Stomach (tissue), 19 donors: ENCODE measurements at regions of chr19 and their contacts with region 1.

Region 1: DNA sequence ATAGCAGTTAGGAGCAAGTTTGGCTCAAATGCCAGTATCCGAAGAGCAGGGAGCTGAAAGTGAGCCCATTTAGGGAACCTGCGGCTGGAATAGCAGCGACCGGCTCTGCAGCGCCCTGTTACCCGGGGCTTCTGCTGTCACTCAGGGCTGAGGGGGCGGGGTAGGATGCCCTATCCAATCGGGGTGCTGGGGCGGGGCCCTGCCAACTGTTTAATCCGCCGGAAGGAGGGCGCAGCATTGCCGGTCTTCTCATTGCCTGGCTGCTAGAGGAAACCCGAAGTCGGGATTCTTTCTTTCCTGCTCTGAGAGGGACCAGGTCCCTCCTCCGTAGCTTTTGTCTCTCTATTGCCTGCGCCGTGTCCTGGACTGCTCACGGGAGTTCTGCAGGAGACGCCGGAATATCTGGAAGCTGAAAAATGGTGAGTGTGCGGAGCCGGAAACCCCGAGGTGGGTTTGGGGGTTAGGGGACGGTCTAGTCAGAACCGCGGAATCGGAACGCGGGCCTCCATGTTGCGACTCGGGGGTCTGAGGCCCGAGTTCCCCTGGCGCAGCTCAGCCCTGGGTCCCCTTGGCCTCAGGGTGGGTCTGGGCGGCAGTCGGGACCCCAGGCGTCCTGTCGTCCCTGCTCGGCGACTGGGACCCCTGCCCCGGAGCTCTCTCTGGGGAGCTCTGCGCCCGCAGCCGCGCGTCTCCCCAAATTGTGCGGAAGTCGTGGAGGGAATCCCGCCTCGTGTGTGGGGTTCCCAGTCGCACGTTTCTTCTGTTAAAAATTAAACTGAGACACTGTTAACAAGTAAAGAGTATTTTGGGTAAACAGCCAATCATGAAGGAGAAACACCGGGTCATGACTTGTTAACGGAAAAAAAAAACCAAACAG is 22.8 kb downstream of the ZNF763 start:
- DNase-seq: peak; percentile 97
- H3K4me3 ChIP-seq: peak overlapping the region; percentile 60 to 99 (median 80)
- H3K27ac ChIP-seq: peak overlapping the region; percentile 84 to 97 (median 89)
- H3K4me1 ChIP-seq: peaks cover 0 to 29% (median 15%) of the 10 kb centered on the region in 4 donors
- H3K27me3 ChIP-seq: no peaks in the 10 kb centered on the region
- CTCF ChIP-seq: peak in 1 of 7 experiments; percentile 13
- EP300 ChIP-seq: no peak
- POLR2A ChIP-seq: peak in 2 of 4 donors; percentile 46 to 49

Region 2: DNA sequence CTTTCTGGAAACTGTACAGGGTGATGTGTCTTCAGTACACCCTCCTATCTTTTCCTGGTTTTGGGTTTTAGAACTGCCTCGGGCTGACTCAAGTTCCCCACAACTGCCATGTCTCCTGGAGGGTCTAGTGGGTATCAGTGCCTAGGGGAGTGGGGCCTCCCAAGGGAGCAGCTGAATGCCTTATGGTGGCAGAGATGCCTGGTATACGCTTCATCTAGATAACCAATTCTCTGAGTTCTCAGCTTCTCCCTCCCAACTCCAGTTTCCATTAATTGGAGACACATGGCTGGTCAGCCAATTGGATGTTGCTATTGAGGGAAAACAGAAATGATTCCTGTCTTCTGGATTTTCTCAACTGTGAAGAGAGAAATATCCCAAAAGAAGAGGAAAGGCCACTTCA is 126.3 kb before region 1 on chr19:
- intact Hi-C with region 1: no loop called
- DNase-seq: no peak
- H3K4me3 ChIP-seq: no peak overlapping the region
- H3K27ac ChIP-seq: no peak overlapping the region
- H3K4me1 ChIP-seq: no peaks in the 10 kb centered on the region
- H3K27me3 ChIP-seq: no peaks in the 10 kb centered on the region
- CTCF ChIP-seq: no peak
- EP300 ChIP-seq: no peak
- POLR2A ChIP-seq: no peak

Region 3: GRCh38 chr19:11881151-11881800 is 106.4 kb before region 1 on chr19:
- intact Hi-C with region 1: loop called (anchors 5 kb)
- DNase-seq: peak; percentile 76 to 89
- H3K4me3 ChIP-seq: no peak overlapping the region
- H3K27ac ChIP-seq: no peak overlapping the region
- H3K4me1 ChIP-seq: peaks cover 8 to 19% (median 15%) of the 10 kb centered on the region in 4 donors
- H3K27me3 ChIP-seq: no peaks in the 10 kb centered on the region
- CTCF ChIP-seq: peak in 5 of 7 experiments; percentile 40 to 85 (median 65)
- EP300 ChIP-seq: no peak
- POLR2A ChIP-seq: no peak

Region 4: GRCh38 chr19:11924886-11925650 is 62.6 kb before region 1 on chr19 and contains the start of gene ZNF700:
- intact Hi-C with region 1: loop called (anchors 10 kb)
- DNase-seq: peak; percentile 98
- H3K4me3 ChIP-seq: peak within 1 kb of the TSS; percentile 68 to 94 (median 80)
- H3K27ac ChIP-seq: peak within 1 kb of the TSS; percentile 94 to 99 (median 97)
- H3K4me1 ChIP-seq: peaks cover 14 to 63% (median 37%) of the 10 kb centered on the region in 4 donors
- H3K27me3 ChIP-seq: no peaks in the 10 kb centered on the region
- CTCF ChIP-seq: no peak
- EP300 ChIP-seq: no peak
- POLR2A ChIP-seq: peak in 1 of 4 donors; percentile 34
- total RNA-seq, gene ZNF700: 8.8 to 25.3 (median 16.5) TPM

Region 5: DNA sequence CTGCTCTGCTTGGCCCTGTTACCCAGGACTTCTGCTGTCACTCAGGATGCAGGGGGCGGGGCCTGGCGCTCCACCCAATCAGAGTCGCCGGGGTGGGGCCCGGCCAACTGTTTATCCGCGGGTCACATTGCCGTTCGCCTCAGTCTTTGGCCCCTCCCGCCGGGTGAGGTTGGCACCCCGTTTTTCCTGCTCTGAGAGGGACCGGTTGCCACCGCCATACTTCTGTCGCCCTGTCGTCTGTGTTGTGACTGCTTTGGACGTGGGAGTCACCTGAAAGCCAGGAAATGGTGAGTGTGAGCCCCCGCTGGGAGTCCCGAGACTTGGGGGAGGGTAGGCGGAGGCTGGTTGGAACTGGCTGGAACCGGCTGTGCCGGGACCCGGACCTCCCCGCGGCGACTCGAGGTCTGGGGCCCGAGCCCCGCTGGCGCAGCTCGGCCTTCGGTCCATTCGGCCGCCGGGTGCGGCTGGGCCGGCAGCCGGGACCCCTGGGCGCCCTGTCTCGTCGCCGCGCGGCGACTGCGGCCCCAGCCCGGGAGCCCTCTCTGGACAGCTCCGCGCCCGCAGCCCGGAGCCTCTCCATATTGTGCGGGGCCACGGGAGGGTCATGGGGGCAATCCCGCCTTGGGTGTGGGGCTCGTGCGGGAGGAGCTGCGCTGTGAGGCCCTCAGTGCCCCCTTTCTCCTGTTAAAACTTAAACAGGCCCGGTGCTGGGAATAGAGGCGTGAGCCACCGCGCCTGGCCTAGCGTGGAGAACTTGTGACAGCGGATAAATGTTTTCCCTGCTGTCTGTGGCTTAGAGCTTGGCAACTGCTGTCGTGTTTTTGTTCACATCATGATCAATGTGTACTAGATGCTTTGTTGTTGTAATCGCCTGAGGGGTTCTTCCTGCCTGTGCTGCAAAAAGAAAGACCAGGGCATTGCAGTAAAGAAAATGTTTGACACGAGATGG is 77.2 kb after region 1 on chr19 and contains the start of gene ZNF844:
- intact Hi-C with region 1: no loop called
- DNase-seq: peak; percentile 98 to 99
- H3K4me3 ChIP-seq: peak within 1 kb of the TSS; percentile 69 to 91 (median 73)
- H3K27ac ChIP-seq: peak within 1 kb of the TSS; percentile 89 to 97 (median 91)
- H3K4me1 ChIP-seq: peaks cover 0 to 25% (median 18%) of the 10 kb centered on the region in 4 donors
- H3K27me3 ChIP-seq: no peaks in the 10 kb centered on the region
- CTCF ChIP-seq: no peak
- EP300 ChIP-seq: no peak
- POLR2A ChIP-seq: peak in 2 of 4 donors; percentile 75 to 80
- total RNA-seq, gene ZNF844: 1.2 to 16.1 (median 11.2) TPM

Region 6: DNA sequence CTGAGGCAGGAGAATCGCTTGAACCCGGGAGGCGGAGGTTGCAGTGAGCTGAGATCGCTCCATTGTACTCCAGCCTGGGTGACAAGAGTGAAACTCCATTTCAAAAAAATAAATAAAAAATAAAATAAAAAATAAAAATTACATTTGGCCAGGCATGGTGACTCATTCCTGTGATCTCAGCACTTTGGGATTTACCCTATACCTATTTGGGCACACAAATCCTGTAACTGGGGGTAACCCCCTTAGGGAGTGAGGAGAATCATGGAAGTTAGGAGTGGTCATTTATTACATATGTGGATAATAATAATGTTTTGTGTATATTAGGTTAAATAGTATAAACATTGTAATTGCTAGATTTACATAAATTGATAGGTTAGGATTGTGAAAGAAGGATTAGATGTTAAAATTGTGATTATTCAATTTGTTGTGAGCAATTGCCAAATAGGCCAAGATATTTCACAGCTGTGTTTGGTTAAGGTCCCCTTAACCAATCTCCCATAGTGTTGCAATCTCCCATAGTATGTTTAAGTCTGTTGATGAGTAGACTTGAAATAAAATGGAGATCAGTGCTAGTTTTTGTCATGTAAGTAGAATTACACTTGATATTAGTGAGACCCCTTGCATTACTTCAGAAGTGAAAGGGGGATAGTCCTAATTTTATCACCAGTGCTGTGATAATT is 107.6 kb after region 1 on chr19:
- intact Hi-C with region 1: no loop called
- DNase-seq: no peak
- H3K4me3 ChIP-seq: no peak overlapping the region
- H3K27ac ChIP-seq: no peak overlapping the region
- H3K4me1 ChIP-seq: peaks cover 0 to 28% (median 15%) of the 10 kb centered on the region in 4 donors
- H3K27me3 ChIP-seq: no peaks in the 10 kb centered on the region
- CTCF ChIP-seq: no peak
- EP300 ChIP-seq: no peak
- POLR2A ChIP-seq: no peak